Activated CD8-positive, alpha-beta T cell treated with anti-CD3 and anti-CD28 coated beads, Interleukin-2, amount 10 ng/mL, durations not matched to agents 7 days and 5 days (primary cell): ENCODE measurements at regions of chr2 and their contacts with region 1.

Region 1: GRCh38 chr2:38581193-38582147 is 21.3 kb downstream of the HNRNPLL start:
- DNase-seq: peak; percentile 59
- ATAC-seq: peak; percentile 89
- H3K4me3 Mint-ChIP-seq: no peak overlapping the region
- H3K27ac Mint-ChIP-seq: no peak overlapping the region
- H3K4me1 Mint-ChIP-seq: peaks cover 8% of the 10 kb centered on the region
- H3K27me3 Mint-ChIP-seq: no peaks in the 10 kb centered on the region

Region 2: DNA sequence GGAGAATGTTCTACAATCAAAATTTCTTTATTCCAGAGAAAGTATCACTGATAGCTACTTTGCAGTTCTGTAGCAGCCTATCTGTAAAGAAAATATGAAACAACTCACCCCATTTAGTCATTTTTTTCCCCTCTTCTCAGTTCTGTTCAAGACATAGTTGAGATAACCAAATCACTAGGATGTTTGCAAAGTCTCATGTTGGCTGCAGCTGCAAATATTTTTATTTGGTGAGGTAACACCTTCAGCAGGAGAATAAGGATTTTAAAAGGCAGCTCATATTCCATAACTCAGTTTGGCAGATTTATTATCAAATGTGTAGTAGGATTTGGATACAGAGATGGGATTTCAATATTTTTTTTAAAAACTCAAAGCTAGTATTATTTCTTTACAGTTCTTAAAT is 19.8 kb before region 1 on chr2:
- CTCF ChIA-PET with region 1: interaction called, 28 read pairs
- POLR2A ChIA-PET with region 1: no interaction called
- DNase-seq: no peak
- ATAC-seq: no peak
- H3K4me3 Mint-ChIP-seq: no peak overlapping the region
- H3K27ac Mint-ChIP-seq: no peak overlapping the region
- H3K4me1 Mint-ChIP-seq: no peaks in the 10 kb centered on the region
- H3K27me3 Mint-ChIP-seq: no peaks in the 10 kb centered on the region

Region 3: GRCh38 chr2:38653715-38654527 is 72.5 kb after region 1 on chr2:
- CTCF ChIA-PET with region 1: interaction called, 13 read pairs
- POLR2A ChIA-PET with region 1: no interaction called
- DNase-seq: peak; percentile 58
- ATAC-seq: peak; percentile 61
- H3K4me3 Mint-ChIP-seq: peak overlapping the region; percentile 52
- H3K27ac Mint-ChIP-seq: peak overlapping the region; percentile 92
- H3K4me1 Mint-ChIP-seq: peaks cover 61% of the 10 kb centered on the region
- H3K27me3 Mint-ChIP-seq: no peaks in the 10 kb centered on the region

Region 4: GRCh38 chr2:38690499-38691294 is 109.2 kb after region 1 on chr2:
- CTCF ChIA-PET with region 1: interaction called, 16 read pairs
- POLR2A ChIA-PET with region 1: no interaction called
- DNase-seq: no peak
- ATAC-seq: peak; percentile 57
- H3K4me3 Mint-ChIP-seq: no peak overlapping the region
- H3K27ac Mint-ChIP-seq: peak overlapping the region; percentile 68
- H3K4me1 Mint-ChIP-seq: peaks cover 37% of the 10 kb centered on the region
- H3K27me3 Mint-ChIP-seq: no peaks in the 10 kb centered on the region

Region 5: DNA sequence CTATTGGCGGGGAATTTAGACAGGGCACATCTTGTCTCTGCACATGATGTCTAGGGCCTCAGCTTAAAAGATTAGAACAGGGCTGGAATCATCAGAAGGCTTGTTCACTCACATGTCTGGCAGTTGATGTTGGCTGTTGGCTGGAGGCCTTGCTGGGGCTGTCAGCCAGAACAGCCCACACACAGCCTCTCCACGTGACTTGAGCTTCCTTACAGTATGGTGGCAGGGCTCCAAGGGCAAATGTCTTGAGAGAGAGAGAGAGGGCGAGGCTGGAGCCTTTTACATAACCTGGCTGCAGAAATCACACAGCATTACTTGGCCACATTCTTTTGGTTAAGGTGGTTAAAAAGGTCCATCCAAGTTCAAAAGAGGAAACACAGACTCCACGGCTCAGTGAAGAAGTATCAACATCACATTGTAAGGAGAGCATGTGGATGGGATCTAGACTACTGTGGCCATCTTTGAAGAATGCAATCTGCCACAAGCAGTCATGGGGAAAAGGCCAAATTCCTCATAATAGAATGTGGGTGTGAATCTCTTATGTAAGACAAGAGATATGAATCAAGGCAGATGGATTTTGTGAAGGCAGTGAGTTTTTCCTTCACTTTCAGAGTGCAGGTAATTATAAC is 139.3 kb after region 1 on chr2:
- CTCF ChIA-PET with region 1: interaction called, 139 read pairs
- POLR2A ChIA-PET with region 1: interaction called, 4 read pairs
- DNase-seq: no peak
- ATAC-seq: peak; percentile 17
- H3K4me3 Mint-ChIP-seq: no peak overlapping the region
- H3K27ac Mint-ChIP-seq: peak overlapping the region; percentile 37
- H3K4me1 Mint-ChIP-seq: peaks cover 33% of the 10 kb centered on the region
- H3K27me3 Mint-ChIP-seq: no peaks in the 10 kb centered on the region

Region 6: DNA sequence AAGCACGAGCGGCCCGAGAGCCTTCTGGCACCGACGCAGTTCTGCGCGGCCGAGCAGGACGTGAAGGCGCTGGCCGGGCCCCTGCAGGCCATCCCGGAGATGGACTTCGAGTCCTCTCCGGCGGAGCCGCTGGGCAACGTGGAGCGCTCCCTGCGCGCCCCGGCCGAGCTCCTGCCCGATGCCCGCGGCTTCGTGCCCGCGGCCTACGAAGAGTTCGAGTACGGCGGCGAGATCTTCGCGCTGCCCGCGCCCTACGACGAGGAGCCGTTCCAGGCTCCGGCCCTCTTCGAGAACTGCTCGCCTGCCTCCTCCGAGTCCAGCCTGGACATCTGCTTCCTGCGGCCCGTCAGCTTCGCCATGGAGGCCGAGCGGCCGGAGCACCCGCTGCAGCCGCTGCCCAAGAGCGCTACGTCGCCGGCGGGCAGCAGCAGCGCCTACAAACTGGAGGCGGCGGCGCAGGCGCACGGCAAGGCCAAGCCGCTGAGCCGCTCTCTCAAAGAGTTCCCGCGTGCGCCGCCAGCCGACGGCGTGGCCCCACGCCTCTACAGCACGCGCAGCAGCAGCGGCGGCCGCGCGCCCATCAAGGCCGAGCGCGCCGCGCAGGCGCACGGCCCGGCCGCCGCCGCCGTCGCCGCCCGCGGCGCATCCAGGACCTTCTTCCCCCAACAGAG is 378.6 kb after region 1 on chr2:
- CTCF ChIA-PET with region 1: no interaction called
- POLR2A ChIA-PET with region 1: no interaction called
- DNase-seq: peak; percentile 78
- ATAC-seq: peak; percentile 99
- H3K4me3 Mint-ChIP-seq: peak overlapping the region; percentile 51
- H3K27ac Mint-ChIP-seq: no peak overlapping the region
- H3K4me1 Mint-ChIP-seq: peaks cover 3% of the 10 kb centered on the region
- H3K27me3 Mint-ChIP-seq: peaks cover 39% of the 10 kb centered on the region